A549 (cell line): ENCODE measurements at regions of chr20 and their contacts with region 1.

Region 1: DNA sequence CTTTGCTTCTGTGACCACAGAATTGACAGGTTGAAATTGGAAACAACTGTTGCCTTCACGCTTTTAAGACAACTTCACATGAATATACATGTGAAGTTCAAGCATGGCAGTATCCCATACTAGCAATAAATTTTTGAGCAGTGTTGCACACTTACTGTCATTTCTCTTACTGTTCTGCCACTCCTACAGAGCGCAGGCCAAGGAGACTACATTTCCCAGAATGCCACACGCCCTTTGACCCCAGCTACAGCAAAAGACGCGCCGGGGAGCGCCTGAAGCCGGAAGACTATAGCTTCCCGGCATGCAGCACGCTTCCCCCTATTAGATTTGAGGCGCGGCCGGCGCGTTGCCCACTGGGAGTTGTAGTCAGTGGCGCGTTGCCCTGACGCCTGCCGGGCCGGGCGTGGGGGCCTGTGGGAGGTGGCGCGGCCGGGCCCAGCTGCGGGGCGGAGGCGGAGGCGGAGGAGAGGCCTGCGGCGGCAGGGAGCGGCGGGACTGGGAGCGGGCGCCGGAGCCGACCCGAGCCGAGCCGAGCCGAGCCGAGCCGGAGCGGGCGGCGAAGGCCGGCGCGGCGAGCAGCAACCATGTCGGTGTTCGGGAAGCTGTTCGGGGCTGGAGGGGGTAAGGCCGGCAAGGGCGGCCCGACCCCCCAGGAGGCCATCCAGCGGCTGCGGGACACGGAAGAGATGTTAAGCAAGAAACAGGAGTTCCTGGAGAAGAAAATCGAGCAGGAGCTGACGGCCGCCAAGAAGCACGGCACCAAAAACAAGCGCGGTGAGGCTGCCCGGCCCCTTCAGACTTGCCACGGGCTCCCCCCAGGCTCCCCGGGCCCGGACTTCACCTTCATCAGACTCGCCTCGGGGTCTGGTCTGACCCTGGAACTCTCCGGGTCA is at the start of gene CHMP4B:
- DNase-seq: peak; percentile 98
- ATAC-seq: peak; percentile 96 to 98
- H3K4me3 ChIP-seq: peak within 1 kb of the TSS; percentile 76
- H3K27ac ChIP-seq: peak within 1 kb of the TSS; percentile 88 to 94
- H3K4me1 ChIP-seq: peaks cover 23% of the 10 kb centered on the region
- CTCF ChIP-seq: no peak
- EP300 ChIP-seq: no peak
- POLR2A ChIP-seq: peak; percentile 53
- RAD21 ChIP-seq: no peak
- polyA plus RNA-seq, gene CHMP4B: 75.8 and 81.3 TPM in 2 replicates

Region 2: GRCh38 chr20:33731693-33732165 is 79.4 kb before region 1 on chr20 and contains the start of gene ZNF341:
- CTCF ChIA-PET with region 1: interaction called, 7 read pairs
- POLR2A ChIA-PET with region 1: interaction called, 14 read pairs
- DNase-seq: peak; percentile 55 to 91
- ATAC-seq: peak; percentile 79 to 80
- H3K4me3 ChIP-seq: peak within 1 kb of the TSS; percentile 58
- H3K27ac ChIP-seq: peak within 1 kb of the TSS; percentile 98
- H3K4me1 ChIP-seq: peaks cover 28% of the 10 kb centered on the region
- CTCF ChIP-seq: peak; percentile 91
- EP300 ChIP-seq: 0 out of 5 replicates have a peak, but pooled peaks of 1 of the 2 experiments have one; percentile 41
- POLR2A ChIP-seq: no peak; the same call in 1 of the 2 replicates
- RAD21 ChIP-seq: peak; percentile 60 to 86
- polyA plus RNA-seq, gene ZNF341: 2.1 and 2.7 TPM in 2 replicates

Region 3: DNA sequence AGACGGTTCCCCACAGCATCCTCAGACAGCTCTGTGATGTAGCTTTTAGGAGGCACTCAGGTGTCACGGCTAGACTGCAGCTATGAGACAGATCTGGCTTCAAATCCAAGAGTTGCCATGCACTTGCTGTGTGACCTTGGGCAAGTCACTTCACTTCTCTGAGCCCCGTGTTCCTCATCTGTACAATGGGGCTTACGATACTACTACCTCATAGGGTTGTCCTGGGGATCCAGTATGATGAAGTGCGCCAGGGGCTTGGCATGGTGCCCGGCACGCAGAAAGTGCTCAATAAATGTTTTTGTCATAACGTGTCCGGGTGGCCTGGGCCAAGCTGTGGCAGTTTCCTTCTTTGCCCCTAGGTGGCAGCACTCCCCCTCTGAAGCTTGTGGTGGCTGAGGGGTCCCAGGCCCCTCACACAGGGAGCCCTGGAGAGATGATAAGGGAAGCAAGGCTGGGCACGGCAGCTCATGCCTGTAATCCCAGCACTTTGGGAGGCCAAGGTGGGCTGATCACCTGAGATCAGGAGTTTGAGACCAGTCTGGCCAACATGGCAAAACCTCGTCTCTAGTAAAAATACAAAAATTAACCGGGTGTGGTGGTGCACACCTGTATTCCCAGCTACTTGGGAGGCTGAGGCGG is 19.1 kb before region 1 on chr20:
- CTCF ChIA-PET with region 1: interaction called, 25 read pairs
- POLR2A ChIA-PET with region 1: interaction called, 3 read pairs
- DNase-seq: peak; percentile 40 to 58
- ATAC-seq: peak in 1 of 2 experiments; percentile 47; a peak in 2 of 6 replicates
- H3K4me3 ChIP-seq: no peak overlapping the region
- H3K27ac ChIP-seq: no peak overlapping the region
- H3K4me1 ChIP-seq: peaks cover 37% of the 10 kb centered on the region
- CTCF ChIP-seq: peak; percentile 76
- EP300 ChIP-seq: no peak
- POLR2A ChIP-seq: no peak
- RAD21 ChIP-seq: peak; percentile 69

Region 4: DNA sequence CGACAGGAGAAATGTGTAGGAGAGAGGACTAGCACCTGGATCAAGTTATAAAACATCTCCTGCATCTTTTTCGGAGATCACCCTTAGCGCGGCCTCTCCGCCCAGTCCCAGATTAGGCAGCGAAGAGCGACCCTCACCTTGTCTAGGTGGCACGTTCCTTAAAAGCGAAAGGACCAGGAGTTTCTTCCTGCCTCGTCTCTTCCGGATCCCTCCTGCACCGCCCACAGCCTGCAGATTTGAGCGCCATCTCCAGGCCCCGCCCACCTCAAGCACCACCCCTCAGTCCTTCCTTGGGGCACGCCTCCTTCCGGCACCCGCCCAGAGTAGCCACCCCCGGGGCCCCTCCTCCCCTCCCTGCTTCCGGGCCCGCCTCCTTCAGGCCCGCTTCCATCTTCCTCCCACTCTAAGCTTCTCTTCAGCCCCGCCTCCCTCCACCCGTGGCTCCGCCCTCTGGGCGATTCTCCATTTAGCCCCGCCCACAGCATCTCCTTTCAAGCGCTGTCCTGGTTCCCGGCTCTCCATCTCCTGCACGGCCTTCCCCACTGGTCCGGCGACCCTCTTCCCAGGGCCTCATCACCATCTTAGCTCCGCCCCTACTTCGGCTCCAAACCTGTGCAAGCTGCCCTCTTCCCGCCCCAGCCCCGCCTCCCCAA is 181.9 kb after region 1 on chr20:
- CTCF ChIA-PET with region 1: no interaction called
- POLR2A ChIA-PET with region 1: interaction called, 11 read pairs
- DNase-seq: peak; percentile 95 to 99
- ATAC-seq: peak; percentile 75 to 88
- H3K4me3 ChIP-seq: peak overlapping the region; percentile 71
- H3K27ac ChIP-seq: peak overlapping the region; percentile 92 to 94
- H3K4me1 ChIP-seq: peaks cover 21% of the 10 kb centered on the region
- CTCF ChIP-seq: no peak
- EP300 ChIP-seq: no peak
- POLR2A ChIP-seq: peak; percentile 96
- RAD21 ChIP-seq: no peak